Prostate gland (tissue), 2 donors: ENCODE measurements at regions of chr7 and their contacts with region 1.

Region 1: DNA sequence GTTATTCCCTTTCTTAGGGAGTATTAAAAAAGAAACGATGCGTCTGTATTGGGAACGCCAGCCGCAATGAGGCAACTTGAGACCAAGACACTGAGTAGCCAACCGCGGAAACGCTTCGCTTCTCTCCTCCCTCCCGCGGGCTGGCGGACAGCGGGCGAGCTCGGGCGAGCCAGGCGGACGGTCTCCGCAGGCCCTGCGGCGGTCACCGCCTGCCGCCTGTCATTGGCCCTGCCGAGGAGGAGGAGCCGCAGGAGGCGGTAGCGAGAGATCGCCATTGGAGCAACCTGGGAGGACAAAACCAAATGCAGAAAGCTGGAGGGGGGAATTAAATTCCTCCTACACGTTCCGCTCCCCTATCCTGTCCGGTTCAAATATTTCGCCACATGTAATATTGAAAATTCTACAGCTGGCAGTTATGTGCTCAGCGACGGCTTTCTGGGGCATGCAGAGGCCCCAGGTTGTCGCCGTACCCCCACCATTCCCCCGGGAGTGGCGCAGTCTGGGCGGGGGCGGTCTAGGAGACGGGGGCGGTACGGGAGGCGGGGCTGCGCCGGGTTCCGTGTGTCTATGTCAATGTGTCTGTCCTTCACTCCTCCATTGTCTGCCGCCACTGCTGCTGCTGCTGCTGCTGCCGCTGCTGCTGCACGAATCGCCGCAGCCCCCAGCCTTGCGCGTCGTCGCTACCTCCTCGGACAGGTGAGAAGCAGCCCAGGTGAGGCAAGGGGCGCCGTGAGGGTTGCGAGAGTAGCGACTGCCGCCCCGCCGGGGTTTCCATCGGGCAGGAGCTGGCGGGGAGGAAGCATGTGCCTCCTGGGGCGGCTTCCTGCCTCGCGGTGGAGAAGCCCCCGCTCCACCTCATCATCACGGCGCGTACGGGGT is at the starts of genes ANKMY2 and BZW2:
- DNase-seq: peak; percentile 93
- H3K4me3 ChIP-seq: peak within 1 kb of the TSS; percentile 77 to 94
- H3K27ac ChIP-seq: peak within 1 kb of the TSS; percentile 89 to 93
- H3K4me1 ChIP-seq: peaks cover 7% of the 10 kb centered on the region
- H3K27me3 ChIP-seq: no peaks in the 10 kb centered on the region
- CTCF ChIP-seq: peak in 2 of 4 experiments; percentile 14 to 61
- POLR2A ChIP-seq: peak; percentile 92
- total RNA-seq, gene ANKMY2: 15.5 to 16.4 TPM
- total RNA-seq, gene BZW2: 31.0 to 33.5 TPM

Region 2: GRCh38 chr7:16420649-16421332 is 225.0 kb before region 1 on chr7:
- intact Hi-C with region 1: loop called (anchors 5 kb)
- DNase-seq: peak; percentile 84
- H3K4me3 ChIP-seq: peak overlapping the region; percentile 51 to 54
- H3K27ac ChIP-seq: peak overlapping the region; percentile 94
- H3K4me1 ChIP-seq: no peaks in the 10 kb centered on the region
- H3K27me3 ChIP-seq: no peaks in the 10 kb centered on the region
- CTCF ChIP-seq: peak in 1 of 4 experiments; percentile 38
- POLR2A ChIP-seq: peak; percentile 83

Region 3: DNA sequence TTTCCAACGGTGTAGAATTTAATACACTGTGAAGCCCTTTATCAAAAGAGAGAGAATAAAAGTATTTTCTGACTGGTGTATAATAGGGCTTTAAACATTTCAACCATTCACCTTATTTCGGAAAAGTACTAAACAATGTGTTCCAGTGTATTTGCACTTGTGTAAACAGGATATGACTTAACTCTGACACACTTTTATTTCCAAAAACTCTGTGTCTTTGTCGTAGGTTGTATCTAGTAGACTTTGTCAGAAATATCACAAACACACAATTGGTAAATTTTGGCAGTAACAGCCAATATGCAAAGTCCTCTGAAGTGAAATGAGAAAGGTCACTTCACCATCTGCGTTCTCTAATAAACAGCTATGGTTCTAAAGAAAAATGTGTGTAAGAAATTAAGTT is 97.4 kb after region 1 on chr7:
- intact Hi-C with region 1: loop called (anchors 2 kb)
- DNase-seq: no peak
- H3K4me3 ChIP-seq: no peak overlapping the region
- H3K27ac ChIP-seq: peak overlapping the region in 1 of 2 donors; percentile 5
- H3K4me1 ChIP-seq: no peaks in the 10 kb centered on the region
- H3K27me3 ChIP-seq: no peaks in the 10 kb centered on the region
- CTCF ChIP-seq: no peak
- POLR2A ChIP-seq: no peak